ENCODE measurements at regions of chr1 and their contacts with region 1.

Region 1: GRCh38 chr1:87328272-87329050 is at the start of gene LMO4:
- DNase-seq: peak; percentile 85
- ATAC-seq: peak; percentile 78
- H3K4me3 Mint-ChIP-seq: peak within 1 kb of the TSS; percentile 95
- H3K27ac Mint-ChIP-seq: peak within 1 kb of the TSS; percentile 97
- H3K4me1 Mint-ChIP-seq: peaks cover 47% of the 10 kb centered on the region
- H3K27me3 Mint-ChIP-seq: no peaks in the 10 kb centered on the region
- CTCF ChIP-seq: no peak
- total RNA-seq, gene LMO4: 31.2 and 37.1 TPM in 2 replicates

Region 2: DNA sequence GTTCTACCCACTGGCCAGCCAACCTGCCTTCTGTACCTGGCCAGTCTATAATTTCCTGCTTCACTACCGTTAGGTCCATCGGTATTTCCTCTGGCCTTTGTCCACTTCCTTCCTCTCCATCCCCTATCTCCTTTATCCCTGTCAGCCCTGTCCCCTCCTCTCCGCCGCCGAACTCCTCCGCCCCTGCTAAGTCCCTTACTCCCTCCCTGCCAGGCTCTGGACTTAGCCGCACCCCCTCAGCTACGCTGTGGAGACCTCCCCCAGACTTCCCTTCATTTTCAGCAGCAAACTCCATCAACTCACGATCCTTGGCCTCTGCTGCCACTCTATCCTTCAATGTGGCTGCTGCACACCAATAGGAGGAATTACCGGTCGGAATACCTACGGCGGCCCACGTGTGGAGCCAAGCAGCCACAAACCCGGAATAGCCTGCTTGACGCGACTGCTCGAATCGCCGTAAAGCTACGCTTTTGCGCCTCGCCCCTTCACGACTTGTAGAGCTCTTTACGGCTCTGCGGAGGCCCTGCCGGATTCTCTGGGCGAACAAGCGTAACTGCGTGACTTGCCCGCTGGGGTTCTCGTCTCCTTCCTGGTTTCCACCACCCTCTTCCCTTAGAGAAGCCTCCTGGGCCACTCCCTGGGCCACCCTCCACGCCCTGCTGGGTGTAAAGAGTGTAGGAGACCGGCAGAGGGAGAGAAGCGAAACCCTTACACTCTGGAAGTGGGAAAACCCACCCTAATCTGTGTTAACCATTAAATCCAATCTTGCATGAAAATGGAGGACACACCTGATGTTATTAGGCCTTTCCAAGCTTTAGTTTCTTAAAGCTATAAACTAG is 1620.3 kb before region 1 on chr1 and contains the start of gene ZNHIT6:
- CTCF ChIA-PET with region 1: no interaction called
- POLR2A ChIA-PET with region 1: no interaction called
- intact Hi-C with region 1: loop called (anchors 5 kb)
- DNase-seq: peak; percentile 69
- ATAC-seq: peak; percentile 96
- H3K4me3 Mint-ChIP-seq: no peak within 1 kb of the TSS
- H3K27ac Mint-ChIP-seq: no peak within 1 kb of the TSS
- H3K4me1 Mint-ChIP-seq: peaks cover 24% of the 10 kb centered on the region
- H3K27me3 Mint-ChIP-seq: no peaks in the 10 kb centered on the region
- CTCF ChIP-seq: no peak
- total RNA-seq, gene ZNHIT6: 19.6 and 21.1 TPM in 2 replicates

Region 3: GRCh38 chr1:86858524-86859261 is 469.8 kb before region 1 on chr1:
- CTCF ChIA-PET with region 1: no interaction called
- POLR2A ChIA-PET with region 1: interaction called, 7 read pairs
- intact Hi-C with region 1: loop called (anchors 5 kb)
- DNase-seq: no peak
- ATAC-seq: peak; percentile 66
- H3K4me3 Mint-ChIP-seq: no peak overlapping the region
- H3K27ac Mint-ChIP-seq: peak overlapping the region; percentile 75
- H3K4me1 Mint-ChIP-seq: peaks cover 33% of the 10 kb centered on the region
- H3K27me3 Mint-ChIP-seq: no peaks in the 10 kb centered on the region
- CTCF ChIP-seq: no peak

Region 4: DNA sequence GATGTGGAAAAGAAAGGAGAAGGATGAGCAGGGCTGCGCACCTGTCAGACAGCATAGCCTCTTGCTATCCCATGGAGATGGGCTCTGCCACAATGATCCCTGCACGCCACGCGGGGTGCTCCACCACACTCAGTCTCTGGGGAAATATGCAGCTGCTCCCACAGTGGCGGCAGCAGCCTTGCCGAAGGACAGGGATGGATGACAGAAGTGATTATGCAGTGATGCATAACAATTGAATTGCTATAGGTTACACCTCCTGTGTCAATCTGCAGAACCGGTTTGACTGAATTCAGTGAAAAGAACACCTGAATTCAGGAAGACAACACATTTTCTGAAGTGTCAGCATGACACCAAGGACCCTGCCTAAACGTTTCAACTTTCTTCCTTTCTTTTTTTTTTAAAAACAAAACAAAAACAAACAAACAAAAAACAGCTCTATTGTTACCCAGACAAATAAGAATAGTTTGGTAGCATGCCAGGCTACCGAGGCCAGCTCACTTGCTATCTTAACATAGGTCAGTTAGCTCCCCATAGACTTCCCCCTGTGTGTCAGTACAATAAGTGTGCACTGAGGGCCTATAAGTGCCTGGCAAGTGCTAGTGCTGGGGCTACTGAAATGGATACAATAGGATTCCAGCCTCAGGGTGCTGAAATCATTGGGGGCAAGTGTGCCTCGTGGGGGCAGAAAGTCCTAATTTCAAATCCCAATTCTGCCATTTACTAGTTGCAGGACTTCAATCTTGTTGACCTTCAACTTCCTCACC is 127.4 kb before region 1 on chr1:
- CTCF ChIA-PET with region 1: no interaction called
- POLR2A ChIA-PET with region 1: no interaction called
- intact Hi-C with region 1: no loop called
- DNase-seq: no peak
- ATAC-seq: no peak
- H3K4me3 Mint-ChIP-seq: no peak overlapping the region
- H3K27ac Mint-ChIP-seq: no peak overlapping the region
- H3K4me1 Mint-ChIP-seq: peaks cover 9% of the 10 kb centered on the region
- H3K27me3 Mint-ChIP-seq: peaks cover 36% of the 10 kb centered on the region
- CTCF ChIP-seq: no peak

Region 5: DNA sequence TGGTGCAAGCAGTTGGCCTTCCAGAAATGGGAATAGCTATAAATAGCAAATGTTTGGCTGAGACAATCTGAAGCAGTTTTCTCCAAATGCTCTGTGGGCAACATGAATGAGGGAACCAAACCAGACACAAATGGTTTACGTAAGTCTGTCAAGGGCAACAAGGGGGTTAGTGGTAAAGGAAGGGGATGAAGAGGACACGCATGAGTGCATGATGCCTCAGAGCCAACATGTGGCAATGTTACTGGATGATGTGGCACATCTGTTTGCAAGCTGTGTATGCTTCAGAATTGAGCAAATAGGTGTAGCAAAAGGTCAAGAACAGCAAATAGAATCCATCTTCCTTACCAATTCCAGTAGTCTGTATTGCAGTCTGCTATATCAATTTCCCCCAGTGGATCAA is 76.1 kb before region 1 on chr1:
- CTCF ChIA-PET with region 1: no interaction called
- POLR2A ChIA-PET with region 1: no interaction called
- intact Hi-C with region 1: no loop called
- DNase-seq: no peak
- ATAC-seq: no peak
- H3K4me3 Mint-ChIP-seq: no peak overlapping the region
- H3K27ac Mint-ChIP-seq: no peak overlapping the region
- H3K4me1 Mint-ChIP-seq: no peaks in the 10 kb centered on the region
- H3K27me3 Mint-ChIP-seq: peaks cover 33% of the 10 kb centered on the region
- CTCF ChIP-seq: no peak

Region 6: GRCh38 chr1:87449348-87449963 is 121.0 kb after region 1 on chr1:
- CTCF ChIA-PET with region 1: interaction called, 3 read pairs
- POLR2A ChIA-PET with region 1: interaction called, 23 read pairs
- intact Hi-C with region 1: loop called (anchors 1 kb)
- DNase-seq: peak; percentile 23
- ATAC-seq: peak; percentile 86
- H3K4me3 Mint-ChIP-seq: peak overlapping the region; percentile 51
- H3K27ac Mint-ChIP-seq: peak overlapping the region; percentile 90
- H3K4me1 Mint-ChIP-seq: peaks cover 33% of the 10 kb centered on the region
- H3K27me3 Mint-ChIP-seq: no peaks in the 10 kb centered on the region
- CTCF ChIP-seq: no peak

Region 7: GRCh38 chr1:87812871-87813577 is 484.6 kb after region 1 on chr1:
- CTCF ChIA-PET with region 1: no interaction called
- POLR2A ChIA-PET with region 1: interaction called, 7 read pairs
- intact Hi-C with region 1: loop called (anchors 1 kb)
- DNase-seq: no peak
- ATAC-seq: peak; percentile 88
- H3K4me3 Mint-ChIP-seq: no peak overlapping the region
- H3K27ac Mint-ChIP-seq: peak overlapping the region; percentile 64
- H3K4me1 Mint-ChIP-seq: peaks cover 23% of the 10 kb centered on the region
- H3K27me3 Mint-ChIP-seq: no peaks in the 10 kb centered on the region
- CTCF ChIP-seq: no peak

Region 8: DNA sequence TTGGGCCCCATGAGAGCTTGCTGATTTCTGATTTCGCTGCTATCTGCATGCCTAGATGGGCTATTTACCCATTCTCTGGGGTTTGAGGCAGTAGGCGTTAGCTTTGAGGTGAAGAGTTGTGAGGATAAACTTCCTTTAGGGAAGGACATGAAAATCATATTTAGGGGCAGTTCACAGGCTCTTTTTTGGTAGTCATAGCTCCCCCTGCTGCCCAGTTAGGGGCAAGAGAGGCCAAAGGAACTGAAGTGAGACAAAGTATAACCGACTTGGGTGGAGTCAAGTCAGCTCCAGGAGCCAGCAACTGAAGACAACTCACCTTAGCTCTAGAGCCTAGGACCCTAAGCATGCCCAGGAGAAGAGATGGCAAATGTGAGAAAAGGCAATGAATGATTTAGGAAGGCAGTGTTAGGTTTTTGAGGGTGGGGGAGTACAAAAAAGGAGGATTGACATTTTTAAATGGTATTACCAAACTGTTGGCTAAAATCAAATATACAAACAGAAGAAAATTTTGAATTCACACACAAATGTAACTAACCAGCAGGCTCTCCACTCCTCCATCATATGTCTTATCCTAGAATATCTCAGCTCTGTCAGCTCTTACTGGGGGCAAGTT is 625.4 kb after region 1 on chr1:
- CTCF ChIA-PET with region 1: interaction called, 82 read pairs
- POLR2A ChIA-PET with region 1: interaction called, 15 read pairs
- intact Hi-C with region 1: loop called (anchors 1 kb)
- DNase-seq: peak; percentile 21
- ATAC-seq: peak; percentile 79
- H3K4me3 Mint-ChIP-seq: no peak overlapping the region
- H3K27ac Mint-ChIP-seq: no peak overlapping the region
- H3K4me1 Mint-ChIP-seq: peaks cover 14% of the 10 kb centered on the region
- H3K27me3 Mint-ChIP-seq: no peaks in the 10 kb centered on the region
- CTCF ChIP-seq: no peak

Region 9: DNA sequence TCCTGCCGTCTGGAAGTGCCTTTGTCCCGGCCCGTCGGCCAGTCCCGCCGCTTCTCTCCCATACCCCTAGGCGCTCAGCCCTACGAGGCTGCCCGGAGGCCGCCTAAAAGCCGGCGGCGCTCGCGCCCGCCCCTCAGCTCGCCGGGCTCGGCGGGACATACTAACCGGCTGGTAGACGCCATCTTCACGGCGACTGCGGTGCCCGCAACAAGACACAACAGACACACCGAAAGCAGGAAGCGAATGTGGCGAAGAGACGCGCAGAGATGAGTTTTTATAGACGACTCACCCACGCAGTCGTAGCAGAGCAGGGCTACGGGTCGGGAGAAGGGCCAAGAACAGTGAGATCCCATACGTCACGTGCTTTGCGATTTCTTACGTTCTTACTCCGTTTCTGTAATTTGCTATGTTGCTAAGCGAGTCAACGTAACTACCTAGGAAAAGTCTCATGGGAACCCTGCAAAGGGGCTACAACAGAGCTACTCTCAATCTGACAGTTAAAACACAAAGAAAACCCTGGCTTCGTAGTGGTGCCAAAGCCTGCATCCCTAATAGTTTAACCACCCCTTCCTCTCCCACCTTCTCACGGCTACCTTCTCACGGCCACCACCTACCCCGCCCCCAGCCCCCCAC is 1563.0 kb after region 1 on chr1 and contains the start of gene GTF2B:
- CTCF ChIA-PET with region 1: no interaction called
- POLR2A ChIA-PET with region 1: interaction called, 5 read pairs
- intact Hi-C with region 1: loop called (anchors 2 kb)
- DNase-seq: peak; percentile 90
- ATAC-seq: peak; percentile 91
- H3K4me3 Mint-ChIP-seq: peak within 1 kb of the TSS; percentile 99
- H3K27ac Mint-ChIP-seq: peak within 1 kb of the TSS; percentile 96
- H3K4me1 Mint-ChIP-seq: peaks cover 40% of the 10 kb centered on the region
- H3K27me3 Mint-ChIP-seq: no peaks in the 10 kb centered on the region
- CTCF ChIP-seq: no peak
- total RNA-seq, gene GTF2B: 30.0 and 32.2 TPM in 2 replicates